Activated B cell treated with CpG ODN at 0.5 μM for 24 hours (primary cell): ENCODE measurements at regions of chr14 and their contacts with region 1.

Region 1: DNA sequence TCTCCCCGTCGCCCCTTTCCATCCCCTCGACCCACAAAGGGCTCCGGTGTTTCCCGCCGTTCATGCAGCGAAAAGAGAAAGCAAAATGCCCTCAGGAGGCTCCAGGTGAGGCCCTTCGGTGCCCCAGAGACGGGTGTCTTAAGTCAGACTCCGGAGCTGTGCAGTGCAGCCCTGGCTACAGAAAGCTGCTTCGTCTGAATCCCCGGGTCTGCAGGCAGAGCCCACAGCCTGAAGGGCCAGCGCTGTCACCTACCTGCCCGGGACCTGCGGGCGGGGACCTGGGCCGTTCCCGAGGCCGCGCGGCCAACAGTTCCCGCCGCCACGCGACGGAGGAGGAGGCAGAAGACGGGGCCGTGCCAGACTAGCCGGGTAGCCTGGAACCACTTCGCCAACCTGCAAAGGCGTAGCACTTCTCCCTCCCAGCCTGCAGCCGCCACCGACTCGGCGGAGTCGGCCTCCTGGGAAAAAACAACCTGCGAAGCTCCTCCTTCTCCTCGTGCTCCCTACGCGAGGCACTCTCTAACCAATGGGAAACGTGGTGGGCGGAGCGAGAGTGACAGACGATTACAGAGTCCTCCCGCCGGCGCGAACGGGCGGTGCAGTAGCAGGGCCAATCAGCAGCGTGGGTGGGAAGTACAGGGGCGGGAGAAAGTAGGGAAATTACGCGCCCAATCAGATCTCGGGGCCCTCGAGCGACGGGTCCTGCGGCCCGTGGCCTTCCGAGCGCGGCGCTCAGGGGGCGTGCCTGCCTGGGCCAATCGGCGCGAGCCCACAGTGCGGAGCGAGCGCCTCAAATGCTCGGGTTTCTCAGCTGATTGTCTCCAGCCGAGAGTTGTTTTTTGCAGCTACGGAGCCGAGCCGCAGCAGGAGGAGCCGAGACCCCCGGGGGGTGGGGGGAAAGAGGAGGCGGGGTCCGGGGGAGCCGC is at the starts of genes GPR137C and TXNDC16:
- DNase-seq: peak; percentile 94
- ATAC-seq: peak; percentile 91
- H3K4me3 Mint-ChIP-seq: peak within 1 kb of the TSS; percentile 91
- H3K27ac Mint-ChIP-seq: peak within 1 kb of the TSS; percentile 80
- H3K4me1 Mint-ChIP-seq: peaks cover 17% of the 10 kb centered on the region
- H3K27me3 Mint-ChIP-seq: peaks cover 2% of the 10 kb centered on the region
- CTCF ChIP-seq: no peak
- total RNA-seq, gene GPR137C: 0.05 and 0.16 TPM in 2 replicates
- total RNA-seq, gene TXNDC16: 1.9 and 3.9 TPM in 2 replicates

Region 2: GRCh38 chr14:51239813-51240803 is 1312.2 kb before region 1 on chr14 and contains the start of gene TMX1:
- CTCF ChIA-PET with region 1: no interaction called
- POLR2A ChIA-PET with region 1: no interaction called
- intact Hi-C with region 1: loop called (anchors 5 kb)
- DNase-seq: peak; percentile 83
- ATAC-seq: peak; percentile 92
- H3K4me3 Mint-ChIP-seq: no peak within 1 kb of the TSS
- H3K27ac Mint-ChIP-seq: no peak within 1 kb of the TSS
- H3K4me1 Mint-ChIP-seq: peaks cover 12% of the 10 kb centered on the region
- H3K27me3 Mint-ChIP-seq: no peaks in the 10 kb centered on the region
- CTCF ChIP-seq: no peak
- total RNA-seq, gene TMX1: 24.6 and 25.3 TPM in 2 replicates

Region 3: DNA sequence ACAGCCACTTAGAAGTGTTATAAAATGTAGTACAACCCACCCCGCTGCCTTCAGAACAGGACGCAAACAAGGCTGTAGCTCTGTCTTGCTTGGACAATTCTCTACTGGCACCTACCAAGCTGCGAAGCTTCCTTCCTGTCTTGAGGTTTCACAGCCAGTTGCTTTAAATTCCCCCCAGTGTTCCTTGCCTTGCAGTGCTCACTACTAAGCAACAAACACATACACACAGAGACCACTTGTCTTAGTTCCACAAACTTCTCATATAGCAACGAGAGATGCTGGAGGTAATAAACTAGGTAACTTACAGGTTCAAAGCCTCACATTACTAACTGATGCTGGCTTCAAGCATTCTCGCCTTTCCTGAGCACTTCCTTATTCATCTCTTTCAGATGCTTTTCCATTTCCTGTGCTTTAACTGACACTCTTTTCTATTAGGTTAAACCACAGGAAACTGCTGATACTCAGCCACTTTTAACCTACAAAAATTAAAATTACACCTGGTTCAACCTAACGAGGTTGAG is 376.3 kb before region 1 on chr14:
- CTCF ChIA-PET with region 1: no interaction called
- POLR2A ChIA-PET with region 1: no interaction called
- intact Hi-C with region 1: loop called (anchors 5 kb)
- DNase-seq: peak; percentile 20
- ATAC-seq: peak; percentile 97
- H3K4me3 Mint-ChIP-seq: peak overlapping the region; percentile 65
- H3K27ac Mint-ChIP-seq: peak overlapping the region; percentile 67
- H3K4me1 Mint-ChIP-seq: peaks cover 41% of the 10 kb centered on the region
- H3K27me3 Mint-ChIP-seq: no peaks in the 10 kb centered on the region
- CTCF ChIP-seq: no peak

Region 4: GRCh38 chr14:52325126-52325525 is 227.2 kb before region 1 on chr14:
- CTCF ChIA-PET with region 1: no interaction called
- POLR2A ChIA-PET with region 1: no interaction called
- intact Hi-C with region 1: loop called (anchors 1 kb)
- DNase-seq: no peak
- ATAC-seq: peak; percentile 96
- H3K4me3 Mint-ChIP-seq: peak overlapping the region; percentile 33
- H3K27ac Mint-ChIP-seq: peak overlapping the region; percentile 32
- H3K4me1 Mint-ChIP-seq: peaks cover 28% of the 10 kb centered on the region
- H3K27me3 Mint-ChIP-seq: peaks cover 16% of the 10 kb centered on the region
- CTCF ChIP-seq: no peak

Region 5: DNA sequence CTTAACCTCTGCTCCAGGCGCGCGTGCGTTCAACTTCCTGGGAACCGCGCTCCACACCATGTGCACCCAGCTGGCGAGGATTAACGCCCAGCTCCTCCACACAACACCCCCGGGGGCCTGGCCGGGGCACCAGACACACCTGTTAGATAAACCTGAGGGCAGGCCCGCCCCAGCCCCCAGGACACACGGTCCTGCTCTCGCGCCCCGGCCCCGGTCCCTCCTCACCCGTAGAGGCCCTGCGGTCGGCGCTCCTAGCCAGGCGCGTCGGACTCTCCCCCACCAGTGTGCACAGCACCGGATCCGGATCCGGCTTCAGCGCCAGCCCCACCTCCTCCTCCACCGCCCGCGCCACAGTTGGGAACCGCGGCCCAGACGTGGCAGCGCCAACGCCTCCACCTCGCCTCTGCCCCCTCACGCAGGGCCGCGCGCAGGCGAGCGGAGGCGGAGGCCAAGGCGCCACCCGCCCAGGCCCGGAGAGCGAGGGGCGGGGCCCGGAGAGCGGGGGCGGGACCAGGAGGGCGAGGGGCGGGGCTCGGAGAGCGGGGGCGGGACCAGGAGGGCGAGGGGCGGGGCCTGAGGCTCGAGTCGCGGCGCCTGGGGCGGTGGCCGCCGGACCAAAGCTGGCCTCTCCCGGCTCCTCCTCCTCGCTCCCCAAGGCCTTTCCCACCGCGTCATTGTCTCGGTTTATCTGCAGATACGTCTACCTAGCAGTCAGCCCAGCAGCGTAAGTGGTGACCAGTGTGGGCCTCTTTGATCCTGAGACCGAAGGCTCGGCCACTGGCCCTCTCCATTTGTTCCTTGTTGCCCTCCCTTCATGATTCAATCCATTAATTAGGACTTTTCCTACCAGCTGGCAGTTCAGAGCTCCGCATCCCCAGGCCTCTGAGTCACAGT is 239.1 kb after region 1 on chr14 and contains the start of gene GNPNAT1:
- CTCF ChIA-PET with region 1: no interaction called
- POLR2A ChIA-PET with region 1: interaction called, 8 read pairs
- intact Hi-C with region 1: loop called (anchors 1 kb)
- DNase-seq: peak; percentile 79
- ATAC-seq: peak; percentile 96
- H3K4me3 Mint-ChIP-seq: peak within 1 kb of the TSS; percentile 91
- H3K27ac Mint-ChIP-seq: peak within 1 kb of the TSS; percentile 77
- H3K4me1 Mint-ChIP-seq: peaks cover 27% of the 10 kb centered on the region
- H3K27me3 Mint-ChIP-seq: no peaks in the 10 kb centered on the region
- CTCF ChIP-seq: no peak
- total RNA-seq, gene GNPNAT1: 9.7 and 11.4 TPM in 2 replicates

Region 6: GRCh38 chr14:53613404-53614253 is 1061.3 kb after region 1 on chr14:
- CTCF ChIA-PET with region 1: no interaction called
- POLR2A ChIA-PET with region 1: no interaction called
- intact Hi-C with region 1: loop called (anchors 5 kb)
- DNase-seq: peak; percentile 59
- ATAC-seq: peak; percentile 93
- H3K4me3 Mint-ChIP-seq: peak overlapping the region; percentile 79
- H3K27ac Mint-ChIP-seq: peak overlapping the region; percentile 100
- H3K4me1 Mint-ChIP-seq: peaks cover 53% of the 10 kb centered on the region
- H3K27me3 Mint-ChIP-seq: no peaks in the 10 kb centered on the region
- CTCF ChIP-seq: no peak